ENCODE measurements at regions of chr9 and their contacts with region 1.

Region 1: GRCh38 chr9:114291064-114291474 is 31.8 kb upstream of the ORM1 start:
- DNase-seq: peak; percentile 88
- ATAC-seq: peak; percentile 73

Region 2: GRCh38 chr9:114108016-114108833 is 182.8 kb before region 1 on chr9:
- intact Hi-C with region 1: loop called (anchors 5 kb)
- DNase-seq: peak; percentile 88
- ATAC-seq: peak; percentile 96

Region 3: GRCh38 chr9:114603248-114603647 is 312.2 kb after region 1 on chr9:
- intact Hi-C with region 1: no loop called
- DNase-seq: no peak
- ATAC-seq: no peak

Measured in sciatic nerve (tissue), 2 donors.